ENCODE measurements at regions of chr4 and their contacts with region 1.

Region 1: DNA sequence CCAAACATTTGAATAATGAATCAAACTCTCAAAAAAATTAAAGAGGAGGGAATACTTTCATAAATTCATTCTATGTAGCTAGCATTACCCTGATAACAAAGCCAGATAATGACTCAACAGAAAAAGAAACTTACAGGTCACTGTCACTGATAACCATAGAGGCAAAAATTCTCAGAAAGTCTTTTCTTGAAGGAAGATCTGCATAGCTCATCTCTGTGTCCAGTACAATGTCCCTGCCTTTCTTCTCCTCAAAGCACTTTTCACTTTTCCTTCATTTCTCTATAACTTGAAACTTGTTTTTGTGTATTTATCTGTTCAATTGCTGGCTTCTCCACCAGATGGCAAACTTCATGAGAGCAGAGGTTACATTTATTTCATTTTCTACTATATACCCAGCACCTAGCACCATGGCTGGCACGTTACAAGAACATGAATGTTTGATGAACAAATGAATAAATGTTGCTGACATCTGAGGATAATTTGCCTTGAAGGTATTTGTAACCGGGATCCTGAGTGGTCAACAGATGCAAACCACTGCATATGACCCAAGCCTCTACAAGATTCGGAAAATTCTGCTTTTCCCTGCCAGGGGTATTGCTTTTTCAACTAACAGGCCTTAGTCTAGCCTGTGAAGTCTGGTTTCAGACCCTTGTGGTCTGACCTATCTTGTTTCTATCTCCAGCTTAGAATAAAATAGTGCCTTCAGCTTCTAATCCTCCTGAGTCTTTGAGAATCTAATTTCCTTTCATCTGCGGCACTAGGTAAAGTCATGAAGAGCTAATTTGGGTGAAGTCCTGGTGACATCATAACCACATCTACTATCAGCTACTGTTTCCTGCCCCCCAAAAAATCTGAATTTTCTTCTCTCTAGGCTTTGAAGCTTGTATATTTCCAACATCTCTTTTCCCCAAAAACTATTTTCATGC is 52.5 kb upstream of the ANTXR2 start:
- DNase-seq: peak; percentile 42
- ATAC-seq: peak; percentile 79
- H3K4me3 Mint-ChIP-seq: peak overlapping the region; percentile 9
- H3K27ac Mint-ChIP-seq: peak overlapping the region; percentile 39
- H3K4me1 Mint-ChIP-seq: peaks cover 49% of the 10 kb centered on the region
- H3K27me3 Mint-ChIP-seq: no peaks in the 10 kb centered on the region

Region 2: GRCh38 chr4:80058740-80059139 is 66.8 kb before region 1 on chr4:
- CTCF ChIA-PET with region 1: no interaction called
- POLR2A ChIA-PET with region 1: no interaction called
- intact Hi-C with region 1: loop called in 1 of 2 experiments (anchors 5 kb)
- DNase-seq: peak; percentile 59
- ATAC-seq: peak; percentile 86
- H3K4me3 Mint-ChIP-seq: peak overlapping the region; percentile 68
- H3K27ac Mint-ChIP-seq: peak overlapping the region; percentile 89
- H3K4me1 Mint-ChIP-seq: peaks cover 54% of the 10 kb centered on the region
- H3K27me3 Mint-ChIP-seq: no peaks in the 10 kb centered on the region

Region 3: GRCh38 chr4:80138551-80139538 is 13.3 kb after region 1 on chr4:
- CTCF ChIA-PET with region 1: interaction called, 10 read pairs
- POLR2A ChIA-PET with region 1: interaction called, 3 read pairs
- intact Hi-C with region 1: loop called in 1 of 2 experiments (anchors 1 kb)
- DNase-seq: peak; percentile 74
- ATAC-seq: peak; percentile 95
- H3K4me3 Mint-ChIP-seq: no peak overlapping the region
- H3K27ac Mint-ChIP-seq: peak overlapping the region; percentile 71
- H3K4me1 Mint-ChIP-seq: peaks cover 58% of the 10 kb centered on the region
- H3K27me3 Mint-ChIP-seq: no peaks in the 10 kb centered on the region

Region 4: GRCh38 chr4:80153874-80154544 is 28.5 kb after region 1 on chr4:
- CTCF ChIA-PET with region 1: interaction called, 14 read pairs
- POLR2A ChIA-PET with region 1: interaction called, 5 read pairs
- intact Hi-C with region 1: no loop called
- DNase-seq: no peak
- ATAC-seq: peak; percentile 89
- H3K4me3 Mint-ChIP-seq: no peak overlapping the region
- H3K27ac Mint-ChIP-seq: peak overlapping the region; percentile 67
- H3K4me1 Mint-ChIP-seq: peaks cover 28% of the 10 kb centered on the region
- H3K27me3 Mint-ChIP-seq: no peaks in the 10 kb centered on the region

Region 5: DNA sequence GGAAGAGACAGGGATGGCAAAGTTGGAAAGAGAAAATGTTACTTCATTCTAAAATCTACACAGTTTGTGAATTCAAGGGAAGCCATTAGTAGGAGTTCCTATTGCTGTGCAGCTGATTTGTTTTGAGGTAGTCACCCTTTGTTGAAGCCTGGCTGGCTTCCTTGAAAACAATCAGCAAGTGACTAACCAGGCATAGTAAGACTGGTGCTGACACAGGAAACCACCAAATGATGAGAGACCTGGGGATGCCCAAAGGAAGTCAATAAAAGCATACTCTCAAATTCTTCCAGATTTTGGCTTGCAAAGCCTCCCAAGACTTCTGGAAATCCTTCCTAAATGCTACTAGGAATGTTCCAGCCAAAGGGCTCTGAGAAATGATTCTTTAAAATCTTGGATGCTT is 47.9 kb after region 1 on chr4:
- CTCF ChIA-PET with region 1: interaction called, 22 read pairs
- POLR2A ChIA-PET with region 1: no interaction called
- intact Hi-C with region 1: loop called (anchors 1 to 2 kb)
- DNase-seq: peak; percentile 72
- ATAC-seq: peak; percentile 91
- H3K4me3 Mint-ChIP-seq: peak overlapping the region; percentile 43
- H3K27ac Mint-ChIP-seq: peak overlapping the region; percentile 79
- H3K4me1 Mint-ChIP-seq: peaks cover 51% of the 10 kb centered on the region
- H3K27me3 Mint-ChIP-seq: no peaks in the 10 kb centered on the region

Region 6: DNA sequence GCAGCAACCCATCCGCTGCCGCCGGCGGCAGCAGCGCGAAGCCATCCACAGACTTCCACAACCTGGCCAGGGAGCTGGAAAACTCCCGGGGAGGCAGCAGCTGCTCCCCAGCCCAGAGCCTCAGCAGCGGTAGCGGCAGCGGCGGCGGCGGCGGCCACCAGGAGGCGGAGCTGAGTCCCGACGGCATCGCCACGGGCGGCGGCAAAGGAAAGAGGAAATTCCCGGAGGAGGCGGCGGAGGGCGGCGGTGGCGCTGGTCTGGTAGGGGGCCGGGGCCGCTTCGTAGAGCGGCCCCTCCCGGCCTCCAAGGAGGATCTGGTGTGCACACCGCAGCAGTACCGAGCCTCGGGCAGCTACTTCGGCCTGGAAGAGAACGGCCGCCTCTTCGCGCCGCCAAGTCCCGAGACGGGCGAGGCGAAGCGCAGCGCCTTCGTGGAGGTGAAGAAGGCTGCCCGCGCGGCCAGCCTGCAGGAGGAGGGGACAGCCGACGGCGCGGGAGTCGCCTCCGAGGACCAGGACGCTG is 76.7 kb after region 1 on chr4:
- CTCF ChIA-PET with region 1: interaction called, 8 read pairs
- POLR2A ChIA-PET with region 1: no interaction called
- intact Hi-C with region 1: loop called (anchors 2 to 5 kb)
- DNase-seq: peak; percentile 88
- ATAC-seq: peak; percentile 66
- H3K4me3 Mint-ChIP-seq: peak overlapping the region; percentile 68
- H3K27ac Mint-ChIP-seq: peak overlapping the region; percentile 64
- H3K4me1 Mint-ChIP-seq: peaks cover 30% of the 10 kb centered on the region
- H3K27me3 Mint-ChIP-seq: peaks cover 17% of the 10 kb centered on the region

Region 7: GRCh38 chr4:80215449-80216052 is 90.0 kb after region 1 on chr4:
- CTCF ChIA-PET with region 1: interaction called, 11 read pairs
- POLR2A ChIA-PET with region 1: no interaction called
- intact Hi-C with region 1: no loop called
- DNase-seq: no peak
- ATAC-seq: no peak
- H3K4me3 Mint-ChIP-seq: no peak overlapping the region
- H3K27ac Mint-ChIP-seq: no peak overlapping the region
- H3K4me1 Mint-ChIP-seq: peaks cover 2% of the 10 kb centered on the region
- H3K27me3 Mint-ChIP-seq: peaks cover 17% of the 10 kb centered on the region